GM23248 (cell line): ENCODE measurements at regions of chr1 and their contacts with region 1.

Region 1: GRCh38 chr1:236748471-236748870 is 46.6 kb upstream of the MTR start:
- DNase-seq: peak; percentile 6
- H3K4me3 ChIP-seq: no peak overlapping the region
- H3K27ac ChIP-seq: no peak overlapping the region
- H3K4me1 ChIP-seq: no peaks in the 10 kb centered on the region
- H3K27me3 ChIP-seq: no peaks in the 10 kb centered on the region

Region 2: GRCh38 chr1:236354330-236355147 is 393.9 kb before region 1 on chr1:
- in situ Hi-C with region 1: no loop called
- DNase-seq: peak; percentile 25
- H3K4me3 ChIP-seq: no peak overlapping the region
- H3K27ac ChIP-seq: no peak overlapping the region
- H3K4me1 ChIP-seq: no peaks in the 10 kb centered on the region
- H3K27me3 ChIP-seq: no peaks in the 10 kb centered on the region

Region 3: DNA sequence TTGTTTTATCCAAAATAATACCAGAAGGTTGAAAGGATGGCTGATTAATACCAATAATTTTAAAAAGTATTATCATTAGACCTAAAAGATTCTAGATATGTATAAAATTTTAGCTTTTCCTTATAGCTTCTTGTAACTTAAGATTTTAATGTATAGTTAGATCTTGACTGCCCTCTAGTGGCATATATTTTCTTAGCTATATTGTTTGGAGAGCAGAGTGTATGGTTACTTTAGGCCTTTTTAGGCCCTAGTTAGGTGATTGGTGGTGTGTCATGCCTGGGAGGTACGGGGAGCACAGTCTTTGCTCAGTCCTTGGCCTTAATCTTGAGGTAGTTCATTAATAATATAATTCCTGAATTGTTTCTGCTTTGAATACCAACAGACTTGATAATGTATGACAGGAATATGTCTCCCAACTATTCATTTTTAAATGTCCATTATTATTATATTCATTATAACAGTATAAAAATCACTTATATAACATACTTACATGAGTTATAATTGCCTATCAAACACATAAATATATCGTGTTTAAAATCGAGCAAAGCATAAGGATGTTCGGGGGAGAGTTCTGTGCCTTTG is 813.9 kb after region 1 on chr1:
- in situ Hi-C with region 1: loop called (anchors 25 kb)
- DNase-seq: peak; percentile 73
- H3K4me3 ChIP-seq: no peak overlapping the region
- H3K27ac ChIP-seq: no peak overlapping the region
- H3K4me1 ChIP-seq: no peaks in the 10 kb centered on the region
- H3K27me3 ChIP-seq: no peaks in the 10 kb centered on the region